ENCODE measurements at regions of chr10 and their contacts with region 1.

Region 1: GRCh38 chr10:29784175-29784773 is 149.5 kb upstream of the SVIL start:
- DNase-seq: peak; percentile 89 to 96
- ATAC-seq: peak; percentile 98 to 99
- H3K4me3 ChIP-seq: no peak overlapping the region
- H3K27ac ChIP-seq: peak overlapping the region; percentile 74 to 89
- H3K4me1 ChIP-seq: peaks cover 45% of the 10 kb centered on the region
- CTCF ChIP-seq: no peak
- EP300 ChIP-seq: peak; percentile 92 to 94
- POLR2A ChIP-seq: no peak
- RAD21 ChIP-seq: peak; percentile 13 to 71; a peak in 4 of 5 replicates

Region 2: DNA sequence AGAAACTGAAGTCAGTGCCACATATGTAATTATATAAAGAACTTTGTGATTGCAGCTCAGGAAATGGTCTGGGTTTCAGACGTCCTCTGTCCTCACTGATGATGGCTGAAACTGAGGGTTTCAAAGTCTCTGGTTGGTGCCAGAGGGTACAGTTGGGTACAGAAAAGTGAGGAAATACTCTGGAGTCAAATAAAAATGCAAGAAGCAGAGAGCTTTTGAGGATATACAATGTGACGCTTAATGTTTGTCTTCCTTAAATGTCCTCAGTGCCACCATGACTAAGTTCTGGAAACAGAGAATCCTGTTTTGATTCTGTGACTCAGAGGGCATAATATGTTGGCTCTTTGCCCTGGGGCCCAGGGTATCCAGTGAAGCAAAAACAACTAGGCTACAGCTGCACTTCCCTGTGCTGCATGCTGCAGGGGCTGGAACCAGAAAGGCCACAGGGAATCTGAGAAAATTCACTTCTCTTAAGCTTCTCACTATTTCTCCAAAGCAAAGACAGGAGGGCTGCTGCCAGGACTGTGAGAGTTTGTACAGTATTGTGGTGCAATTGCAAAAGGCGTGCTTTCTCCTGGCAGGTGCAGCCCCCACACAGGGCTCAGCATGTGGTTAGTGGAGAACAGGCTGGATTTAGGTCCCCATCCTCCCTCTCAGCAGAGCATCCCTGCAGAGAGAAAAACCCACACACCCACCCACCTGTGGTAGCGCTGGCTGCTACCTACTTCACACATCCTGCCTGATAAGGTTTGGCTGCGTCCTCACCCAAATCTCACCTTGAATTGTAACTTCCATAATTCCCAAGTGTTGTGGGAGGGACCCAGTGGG is 20.0 kb after region 1 on chr10:
- CTCF ChIA-PET with region 1: interaction called, 10 read pairs
- POLR2A ChIA-PET with region 1: interaction called, 3 read pairs
- DNase-seq: peak; percentile 82 to 85
- ATAC-seq: peak; percentile 80 to 83
- H3K4me3 ChIP-seq: peak overlapping the region; percentile 21; the same call in 1 of the 3 replicates
- H3K27ac ChIP-seq: peak overlapping the region; percentile 79 to 86
- H3K4me1 ChIP-seq: peaks cover 55% of the 10 kb centered on the region
- CTCF ChIP-seq: no peak
- EP300 ChIP-seq: peak; percentile 34 to 81; a peak in 3 of 5 replicates
- POLR2A ChIP-seq: no peak
- RAD21 ChIP-seq: no peak; a peak in 2 of 5 replicates